Heart right ventricle (tissue), 16 donors: ENCODE measurements at regions of chr1 and their contacts with region 1.

Region 1: GRCh38 chr1:19918057-19918456 is 5.4 kb downstream of the PLA2G2E start:
- DNase-seq: peak; percentile 75 to 80
- ATAC-seq: peak; percentile 49 to 87 (median 82)
- H3K4me3 ChIP-seq: no peak overlapping the region
- H3K27ac ChIP-seq: peak overlapping the region in 1 of 10 donors; percentile 17
- H3K4me1 ChIP-seq: peaks cover 0 to 10% (median 0%) of the 10 kb centered on the region in 9 donors
- H3K27me3 ChIP-seq: peaks cover 0 to 8% (median 0%) of the 10 kb centered on the region in 7 donors
- CTCF ChIP-seq: peak; percentile 80 to 92 (median 90)

Region 2: GRCh38 chr1:19744335-19744743 is 173.7 kb before region 1 on chr1:
- intact Hi-C with region 1: no loop called
- DNase-seq: no peak
- ATAC-seq: peak in 3 of 8 donors; percentile 24 to 58 (median 57)
- H3K4me3 ChIP-seq: no peak overlapping the region
- H3K27ac ChIP-seq: no peak overlapping the region
- H3K4me1 ChIP-seq: no peaks in the 10 kb centered on the region
- H3K27me3 ChIP-seq: no peaks in the 10 kb centered on the region
- CTCF ChIP-seq: no peak

Region 3: GRCh38 chr1:19967808-19968207 is 49.8 kb after region 1 on chr1:
- intact Hi-C with region 1: loop called in 1 of 10 experiments (anchors 5 kb)
- DNase-seq: peak; percentile 62 to 76
- ATAC-seq: peak; percentile 88 to 93 (median 90)
- H3K4me3 ChIP-seq: no peak overlapping the region
- H3K27ac ChIP-seq: peak overlapping the region in 8 of 10 donors; percentile 55 to 87 (median 80)
- H3K4me1 ChIP-seq: peaks cover 0 to 20% (median 5%) of the 10 kb centered on the region in 9 donors
- H3K27me3 ChIP-seq: peaks cover 0 to 21% (median 6%) of the 10 kb centered on the region in 7 donors
- CTCF ChIP-seq: no peak

Region 4: GRCh38 chr1:20080441-20081352 is 162.6 kb after region 1 on chr1:
- intact Hi-C with region 1: no loop called
- DNase-seq: no peak
- ATAC-seq: peak in 4 of 8 donors; percentile 23 to 52 (median 40)
- H3K4me3 ChIP-seq: no peak overlapping the region
- H3K27ac ChIP-seq: peak overlapping the region in 9 of 10 donors; percentile 21 to 49 (median 32)
- H3K4me1 ChIP-seq: peaks cover 3 to 70% (median 15%) of the 10 kb centered on the region in 9 donors
- H3K27me3 ChIP-seq: peaks cover 0 to 17% (median 0%) of the 10 kb centered on the region in 7 donors
- CTCF ChIP-seq: no peak

Region 5: DNA sequence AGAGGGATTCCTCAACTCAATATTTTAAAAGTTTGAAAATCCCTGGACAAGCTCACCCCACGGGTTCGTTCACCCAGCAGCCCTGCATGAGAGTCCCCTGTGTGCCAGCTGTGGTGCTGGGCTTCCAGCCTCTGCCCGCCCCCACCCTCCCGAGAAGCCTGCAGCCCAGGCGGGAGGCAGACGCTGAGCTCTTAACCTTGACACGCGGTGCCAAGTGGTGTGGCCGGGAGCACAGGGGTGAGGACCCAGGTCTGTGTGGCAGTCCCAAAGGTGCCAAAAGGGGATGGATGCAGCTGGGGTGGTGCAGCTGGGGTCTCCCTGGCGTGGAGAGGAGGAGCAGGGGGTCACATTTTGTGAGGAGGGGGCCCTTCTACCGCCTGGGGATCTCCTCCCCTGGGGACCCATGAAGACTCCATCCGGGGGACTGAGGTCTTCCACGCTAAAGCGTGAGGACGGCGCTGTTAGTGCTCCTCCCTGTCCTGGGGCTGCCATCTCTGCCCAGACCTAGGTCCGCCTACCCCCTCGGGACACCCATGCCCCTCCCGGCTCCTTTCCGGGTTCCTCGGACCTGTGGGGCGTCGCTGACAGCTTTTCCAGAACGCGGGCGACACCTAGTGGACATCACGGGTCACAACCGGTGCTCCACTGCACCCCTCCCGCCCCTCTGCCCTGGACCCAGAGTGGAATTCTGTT is 234.0 kb after region 1 on chr1:
- intact Hi-C with region 1: loop called (anchors 1 to 5 kb)
- DNase-seq: peak; percentile 83 to 87
- ATAC-seq: peak; percentile 89 to 96 (median 93)
- H3K4me3 ChIP-seq: peak overlapping the region; percentile 1 to 53 (median 44)
- H3K27ac ChIP-seq: peak overlapping the region in 4 of 10 donors; percentile 29 to 73 (median 48)
- H3K4me1 ChIP-seq: peaks cover 3 to 27% (median 15%) of the 10 kb centered on the region in 9 donors
- H3K27me3 ChIP-seq: peaks cover 0 to 20% (median 0%) of the 10 kb centered on the region in 7 donors
- CTCF ChIP-seq: peak; percentile 91 to 97 (median 95)

Region 6: DNA sequence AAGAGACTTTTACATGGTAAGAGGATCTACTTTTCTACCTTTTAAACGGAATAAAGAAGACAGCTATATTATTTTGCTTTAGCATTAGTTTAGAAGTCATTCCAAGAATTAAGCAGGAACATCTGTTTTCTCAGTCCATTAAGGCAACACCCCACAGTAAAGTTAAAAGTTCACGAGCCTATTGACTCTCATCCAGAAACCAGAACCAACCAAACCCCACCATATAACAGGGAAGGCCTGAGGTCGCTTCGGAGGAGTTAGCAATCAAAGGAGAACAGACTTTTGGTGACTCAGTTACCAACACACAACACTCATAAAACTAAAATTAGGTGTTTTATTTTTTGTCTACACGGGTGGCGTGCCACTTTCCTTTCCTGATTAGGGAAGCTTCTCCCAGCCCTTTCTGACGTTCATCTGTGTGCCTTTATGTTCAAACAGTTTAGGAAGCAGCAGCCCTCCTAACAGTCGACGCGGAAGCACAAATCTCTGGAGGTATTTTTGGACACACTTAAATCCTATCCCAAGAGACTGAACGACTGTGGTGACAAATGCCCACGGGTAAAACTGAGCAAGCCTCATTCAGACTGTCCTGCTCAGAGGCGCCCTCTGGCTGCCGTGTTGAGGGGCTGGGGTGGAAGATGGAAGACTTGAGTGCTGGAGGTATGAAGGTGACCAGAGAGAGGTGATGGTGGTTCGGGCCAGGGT is 276.9 kb after region 1 on chr1:
- intact Hi-C with region 1: loop called in 4 of 10 experiments (anchors 5 kb)
- DNase-seq: peak; percentile 60 to 76
- ATAC-seq: peak; percentile 72 to 82 (median 76)
- H3K4me3 ChIP-seq: peak overlapping the region in 1 of 10 donors; percentile 32
- H3K27ac ChIP-seq: no peak overlapping the region
- H3K4me1 ChIP-seq: peaks cover 0 to 21% (median 4%) of the 10 kb centered on the region in 9 donors
- H3K27me3 ChIP-seq: peaks cover 0 to 35% (median 13%) of the 10 kb centered on the region in 7 donors
- CTCF ChIP-seq: peak; percentile 51 to 90 (median 82)

Region 7: DNA sequence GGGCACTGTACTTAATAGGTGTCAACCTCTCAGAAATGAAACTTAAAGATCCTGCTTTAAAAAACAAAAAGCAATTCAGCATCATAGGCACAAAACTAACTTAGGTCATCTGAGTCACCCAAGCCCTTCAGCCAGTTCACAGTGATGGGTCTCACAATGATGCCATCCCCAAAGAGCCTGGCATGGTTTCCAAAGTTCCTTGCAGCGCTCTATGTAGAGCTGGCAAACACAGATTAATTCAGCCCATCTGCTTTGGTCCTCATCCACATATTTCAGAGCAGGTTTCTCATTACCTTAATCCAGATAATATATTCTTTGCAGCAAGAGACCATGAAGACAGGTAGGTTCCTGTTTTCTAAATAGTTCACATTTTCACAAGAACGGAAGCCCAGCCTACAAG is 282.9 kb after region 1 on chr1:
- intact Hi-C with region 1: loop called in 3 of 10 experiments (anchors 5 kb)
- DNase-seq: no peak
- ATAC-seq: no peak
- H3K4me3 ChIP-seq: no peak overlapping the region
- H3K27ac ChIP-seq: no peak overlapping the region
- H3K4me1 ChIP-seq: no peaks in the 10 kb centered on the region
- H3K27me3 ChIP-seq: peaks cover 0 to 52% (median 10%) of the 10 kb centered on the region in 7 donors
- CTCF ChIP-seq: no peak